Naive thymus-derived CD4-positive, alpha-beta T cell (primary cell): ENCODE measurements at regions of chr5 and their contacts with region 1.

Region 1: DNA sequence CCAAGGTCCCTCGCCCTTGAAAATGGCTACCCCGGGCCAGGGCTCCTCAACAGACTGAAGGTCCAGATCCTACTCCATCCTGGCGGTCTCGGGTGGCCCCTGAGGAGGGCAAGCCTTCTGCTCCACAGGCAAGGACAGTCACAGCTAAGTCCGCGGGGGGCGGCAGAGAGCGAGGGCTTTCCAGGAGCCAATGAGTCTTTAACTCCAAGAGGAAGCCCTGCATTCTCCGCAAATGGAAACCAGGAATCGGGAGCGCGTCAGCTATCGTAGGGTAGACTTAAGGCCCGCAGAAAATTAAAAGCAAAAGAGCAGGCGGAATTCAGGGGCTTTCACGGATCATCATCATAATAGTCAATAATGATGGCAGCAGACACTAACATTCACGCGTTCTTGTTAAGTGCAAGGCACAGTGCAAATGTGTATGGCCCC is 87.8 kb upstream of the TNFAIP8 start:
- DNase-seq: peak; percentile 66 to 91 (median 75)
- ATAC-seq: peak; percentile 89
- H3K4me3 ChIP-seq: peak overlapping the region; percentile 96
- H3K4me3 Mint-ChIP-seq: peak overlapping the region; percentile 95 to 100 (median 98)
- H3K27ac ChIP-seq: peak overlapping the region; percentile 85
- H3K27ac Mint-ChIP-seq: peak overlapping the region; percentile 87 to 99 (median 96)
- H3K4me1 ChIP-seq: peaks cover 24 to 32% of the 10 kb centered on the region in 2 donors
- H3K4me1 Mint-ChIP-seq: peaks cover 47 to 74% (median 72%) of the 10 kb centered on the region in 7 donors
- H3K27me3 ChIP-seq: no peaks in the 10 kb centered on the region
- H3K27me3 Mint-ChIP-seq: no peaks in the 10 kb centered on the region

Region 2: GRCh38 chr5:118987988-118988865 is 279.7 kb before region 1 on chr5 and contains the start of gene DTWD2:
- CTCF ChIA-PET with region 1: interaction called, 3 read pairs
- POLR2A ChIA-PET with region 1: no interaction called
- intact Hi-C with region 1: loop called in 1 of 2 experiments (anchors 1 kb)
- DNase-seq: peak; percentile 84 to 98 (median 95)
- ATAC-seq: peak; percentile 95
- H3K4me3 ChIP-seq: peak within 1 kb of the TSS; percentile 59
- H3K4me3 Mint-ChIP-seq: peak within 1 kb of the TSS; percentile 78 to 87 (median 84)
- H3K27ac ChIP-seq: peak within 1 kb of the TSS; percentile 74
- H3K27ac Mint-ChIP-seq: peak within 1 kb of the TSS in 8 of 9 donors; percentile 19 to 84 (median 79)
- H3K4me1 ChIP-seq: peaks cover 6 to 8% of the 10 kb centered on the region in 2 donors
- H3K4me1 Mint-ChIP-seq: peaks cover 14 to 39% (median 28%) of the 10 kb centered on the region in 7 donors
- H3K27me3 ChIP-seq: no peaks in the 10 kb centered on the region
- H3K27me3 Mint-ChIP-seq: peaks cover 0 to 2% (median 0%) of the 10 kb centered on the region in 5 donors
- total RNA-seq, gene DTWD2: 2.6 to 5.8 (median 3.4) TPM

Region 3: GRCh38 chr5:119238265-119239118 is 29.5 kb before region 1 on chr5:
- CTCF ChIA-PET with region 1: no interaction called
- POLR2A ChIA-PET with region 1: interaction called, 8 read pairs
- intact Hi-C with region 1: loop called in 1 of 2 experiments (anchors 2 kb)
- DNase-seq: peak in 6 of 9 donors; percentile 10 to 66 (median 56)
- ATAC-seq: peak; percentile 81
- H3K4me3 ChIP-seq: peak overlapping the region; percentile 2
- H3K4me3 Mint-ChIP-seq: peak overlapping the region; percentile 13 to 82 (median 66)
- H3K27ac ChIP-seq: peak overlapping the region; percentile 67
- H3K27ac Mint-ChIP-seq: peak overlapping the region in 8 of 9 donors; percentile 85 to 94 (median 90)
- H3K4me1 ChIP-seq: peaks cover 0 to 17% of the 10 kb centered on the region in 2 donors
- H3K4me1 Mint-ChIP-seq: peaks cover 7 to 57% (median 47%) of the 10 kb centered on the region in 7 donors
- H3K27me3 ChIP-seq: no peaks in the 10 kb centered on the region
- H3K27me3 Mint-ChIP-seq: no peaks in the 10 kb centered on the region

Region 4: GRCh38 chr5:119309326-119309725 is 41.4 kb after region 1 on chr5:
- CTCF ChIA-PET with region 1: interaction called, 10 read pairs
- POLR2A ChIA-PET with region 1: interaction called, 466 read pairs
- intact Hi-C with region 1: loop called (anchors 1 to 2 kb)
- DNase-seq: no peak
- ATAC-seq: peak; percentile 24
- H3K4me3 ChIP-seq: peak overlapping the region; percentile 31
- H3K4me3 Mint-ChIP-seq: peak overlapping the region; percentile 71 to 90 (median 83)
- H3K27ac ChIP-seq: peak overlapping the region; percentile 64
- H3K27ac Mint-ChIP-seq: peak overlapping the region; percentile 92 to 99 (median 97)
- H3K4me1 ChIP-seq: peaks cover 86 to 94% of the 10 kb centered on the region in 2 donors
- H3K4me1 Mint-ChIP-seq: peaks cover 55 to 99% (median 95%) of the 10 kb centered on the region in 7 donors
- H3K27me3 ChIP-seq: no peaks in the 10 kb centered on the region
- H3K27me3 Mint-ChIP-seq: no peaks in the 10 kb centered on the region

Region 5: GRCh38 chr5:119355685-119356611 is 88.0 kb after region 1 on chr5 and contains the start of gene TNFAIP8:
- CTCF ChIA-PET with region 1: interaction called, 3 read pairs
- POLR2A ChIA-PET with region 1: interaction called, 7 read pairs
- intact Hi-C with region 1: loop called in 1 of 2 experiments (anchors 2 kb)
- DNase-seq: peak in 2 of 9 donors; percentile 69 to 85
- ATAC-seq: peak; percentile 61
- H3K4me3 ChIP-seq: peak within 1 kb of the TSS; percentile 53
- H3K4me3 Mint-ChIP-seq: peak within 1 kb of the TSS; percentile 81 to 98 (median 90)
- H3K27ac ChIP-seq: peak within 1 kb of the TSS; percentile 55
- H3K27ac Mint-ChIP-seq: peak within 1 kb of the TSS; percentile 86 to 97 (median 91)
- H3K4me1 ChIP-seq: peaks cover 78 to 88% of the 10 kb centered on the region in 2 donors
- H3K4me1 Mint-ChIP-seq: peaks cover 66 to 100% (median 97%) of the 10 kb centered on the region in 7 donors
- H3K27me3 ChIP-seq: no peaks in the 10 kb centered on the region
- H3K27me3 Mint-ChIP-seq: no peaks in the 10 kb centered on the region
- total RNA-seq, gene TNFAIP8: 102 to 162 (median 130) TPM

Region 6: GRCh38 chr5:119452373-119453039 is 184.5 kb after region 1 on chr5 and contains the start of gene HSD17B4:
- CTCF ChIA-PET with region 1: no interaction called
- POLR2A ChIA-PET with region 1: no interaction called
- intact Hi-C with region 1: loop called (anchors 2 kb)
- DNase-seq: peak; percentile 61 to 89 (median 85)
- ATAC-seq: peak; percentile 94
- H3K4me3 ChIP-seq: peak within 1 kb of the TSS; percentile 86
- H3K4me3 Mint-ChIP-seq: peak within 1 kb of the TSS; percentile 86 to 98 (median 92)
- H3K27ac ChIP-seq: peak within 1 kb of the TSS; percentile 84
- H3K27ac Mint-ChIP-seq: peak within 1 kb of the TSS; percentile 80 to 94 (median 86)
- H3K4me1 ChIP-seq: peaks cover 5 to 9% of the 10 kb centered on the region in 2 donors
- H3K4me1 Mint-ChIP-seq: peaks cover 11 to 24% (median 20%) of the 10 kb centered on the region in 7 donors
- H3K27me3 ChIP-seq: no peaks in the 10 kb centered on the region
- H3K27me3 Mint-ChIP-seq: peaks cover 0 to 17% (median 0%) of the 10 kb centered on the region in 5 donors
- total RNA-seq, gene HSD17B4: 22.5 to 77.2 (median 71.0) TPM